Heart left ventricle (tissue), 16 donors: ENCODE measurements at regions of chr15 and their contacts with region 1.

Region 1: GRCh38 chr15:39580117-39580484 is 778 bp upstream of the THBS1 start:
- DNase-seq: peak; percentile 91 to 96 (median 92)
- ATAC-seq: peak; percentile 66 to 83 (median 83)
- H3K4me3 ChIP-seq: peak overlapping the region; percentile 35 to 78 (median 64)
- H3K27ac ChIP-seq: peak overlapping the region; percentile 61 to 97 (median 88)
- H3K4me1 ChIP-seq: peaks cover 0 to 52% (median 25%) of the 10 kb centered on the region in 12 donors
- H3K27me3 ChIP-seq: peaks cover 0 to 4% (median 0%) of the 10 kb centered on the region in 9 donors
- CTCF ChIP-seq: peak; percentile 95 to 99 (median 97)
- POLR2A ChIP-seq: no peak

Region 2: GRCh38 chr15:38699633-38700230 is 880.4 kb before region 1 on chr15:
- intact Hi-C with region 1: loop called in 1 of 10 experiments (anchors 10 kb)
- DNase-seq: peak in 3 of 5 donors; percentile 24 to 43 (median 34)
- ATAC-seq: peak in 2 of 4 donors; percentile 25 to 43
- H3K4me3 ChIP-seq: no peak overlapping the region
- H3K27ac ChIP-seq: no peak overlapping the region
- H3K4me1 ChIP-seq: peaks cover 0 to 15% (median 0%) of the 10 kb centered on the region in 12 donors
- H3K27me3 ChIP-seq: peaks cover 0 to 3% (median 0%) of the 10 kb centered on the region in 9 donors
- CTCF ChIP-seq: peak; percentile 68 to 90 (median 78)
- POLR2A ChIP-seq: no peak

Region 3: GRCh38 chr15:38817427-38818156 is 762.5 kb before region 1 on chr15:
- intact Hi-C with region 1: loop called (anchors 2 to 10 kb)
- DNase-seq: peak; percentile 69 to 89 (median 74)
- ATAC-seq: peak; percentile 80 to 94 (median 91)
- H3K4me3 ChIP-seq: no peak overlapping the region
- H3K27ac ChIP-seq: peak overlapping the region in 1 of 12 donors; percentile 8
- H3K4me1 ChIP-seq: peaks cover 0 to 9% (median 0%) of the 10 kb centered on the region in 12 donors
- H3K27me3 ChIP-seq: no peaks in the 10 kb centered on the region
- CTCF ChIP-seq: peak; percentile 97 to 100 (median 98)
- POLR2A ChIP-seq: no peak

Region 4: DNA sequence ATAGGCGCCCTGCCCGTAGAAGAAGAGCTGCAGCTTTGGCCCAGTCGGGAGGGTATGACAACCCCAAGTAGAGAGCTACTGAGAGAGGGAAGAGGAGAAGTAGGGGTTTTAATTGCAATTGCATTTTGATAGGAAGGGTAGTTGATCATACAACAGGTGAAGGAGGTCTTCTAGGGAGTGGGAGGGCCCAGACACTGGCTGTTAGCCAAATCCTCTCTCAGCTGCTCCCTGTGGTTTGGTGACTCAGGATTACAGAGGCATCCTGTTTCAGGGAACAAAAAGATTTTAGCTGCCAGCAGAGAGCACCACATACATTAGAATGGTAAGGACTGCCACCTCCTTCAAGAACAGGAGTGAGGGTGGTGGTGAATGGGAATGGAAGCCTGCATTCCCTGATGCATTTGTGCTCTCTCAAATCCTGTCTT is 408.1 kb before region 1 on chr15:
- intact Hi-C with region 1: loop called (anchors 1 to 5 kb)
- DNase-seq: peak in 4 of 5 donors; percentile 38 to 64 (median 48)
- ATAC-seq: peak; percentile 59 to 96 (median 94)
- H3K4me3 ChIP-seq: no peak overlapping the region
- H3K27ac ChIP-seq: peak overlapping the region in 7 of 12 donors; percentile 5 to 66 (median 23)
- H3K4me1 ChIP-seq: peaks cover 0 to 23% (median 8%) of the 10 kb centered on the region in 12 donors
- H3K27me3 ChIP-seq: no peaks in the 10 kb centered on the region
- CTCF ChIP-seq: peak; percentile 16 to 61 (median 42)
- POLR2A ChIP-seq: no peak

Region 5: GRCh38 chr15:39429898-39430357 is 150.2 kb before region 1 on chr15:
- intact Hi-C with region 1: loop called in 4 of 10 experiments (anchors 2 to 10 kb)
- DNase-seq: no peak
- ATAC-seq: no peak
- H3K4me3 ChIP-seq: no peak overlapping the region
- H3K27ac ChIP-seq: peak overlapping the region in 7 of 12 donors; percentile 27 to 70 (median 34)
- H3K4me1 ChIP-seq: peaks cover 0 to 83% (median 37%) of the 10 kb centered on the region in 12 donors
- H3K27me3 ChIP-seq: no peaks in the 10 kb centered on the region
- CTCF ChIP-seq: no peak
- POLR2A ChIP-seq: no peak

Region 6: GRCh38 chr15:39495871-39496840 is 83.9 kb before region 1 on chr15:
- intact Hi-C with region 1: loop called in 3 of 10 experiments (anchors 5 kb)
- DNase-seq: no peak
- ATAC-seq: no peak
- H3K4me3 ChIP-seq: no peak overlapping the region
- H3K27ac ChIP-seq: peak overlapping the region in 4 of 12 donors; percentile 10 to 45 (median 36)
- H3K4me1 ChIP-seq: peaks cover 0 to 57% (median 23%) of the 10 kb centered on the region in 12 donors
- H3K27me3 ChIP-seq: no peaks in the 10 kb centered on the region
- CTCF ChIP-seq: no peak
- POLR2A ChIP-seq: no peak